Ovary (tissue), 10 donors: ENCODE measurements at regions of chr7 and their contacts with region 1.

Region 1: GRCh38 chr7:80900583-80901576 is 18.0 kb downstream of the SEMA3C start:
- DNase-seq: peak in 1 of 5 donors; percentile 39
- H3K4me3 ChIP-seq: no peak overlapping the region
- H3K27ac ChIP-seq: peak overlapping the region in 1 of 2 donors; percentile 2
- H3K4me1 ChIP-seq: no peaks in the 10 kb centered on the region
- H3K27me3 ChIP-seq: no peaks in the 10 kb centered on the region
- CTCF ChIP-seq: no peak
- EP300 ChIP-seq: no peak
- POLR2A ChIP-seq: no peak

Region 2: DNA sequence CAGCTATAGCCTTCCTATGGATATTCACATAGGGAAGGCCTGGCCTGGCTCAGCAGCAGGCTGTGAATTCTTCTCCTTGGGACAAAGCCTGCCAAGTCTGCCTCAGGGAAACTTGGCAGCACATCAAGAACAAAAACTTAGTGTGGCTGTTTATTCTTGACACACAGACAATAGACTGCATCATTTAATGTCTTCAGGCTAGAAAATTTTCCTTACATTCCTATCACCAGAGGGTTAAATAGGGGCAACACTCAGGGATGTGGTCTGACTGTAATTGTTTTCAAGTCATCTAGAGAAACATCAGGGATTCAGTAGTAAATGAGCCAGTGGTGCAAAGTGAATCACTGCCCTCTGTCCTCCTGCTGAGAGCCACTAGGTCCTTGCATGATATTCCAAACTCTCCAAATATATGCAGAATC is 119.3 kb before region 1 on chr7:
- intact Hi-C with region 1: loop called in 1 of 4 experiments (anchors 10 kb)
- DNase-seq: peak in 4 of 5 donors; percentile 36 to 66 (median 51)
- H3K4me3 ChIP-seq: no peak overlapping the region
- H3K27ac ChIP-seq: no peak overlapping the region
- H3K4me1 ChIP-seq: peaks cover 4% of the 10 kb centered on the region
- H3K27me3 ChIP-seq: no peaks in the 10 kb centered on the region
- CTCF ChIP-seq: no peak
- EP300 ChIP-seq: no peak
- POLR2A ChIP-seq: no peak